ENCODE measurements at regions of chr12 and their contacts with region 1.

Region 1: GRCh38 chr12:22034709-22035506 is 11.1 kb upstream of the CMAS start:
- DNase-seq: no peak
- ATAC-seq: no peak
- H3K4me3 Mint-ChIP-seq: no peak overlapping the region
- H3K27ac Mint-ChIP-seq: no peak overlapping the region
- H3K4me1 Mint-ChIP-seq: peaks cover 6% of the 10 kb centered on the region
- H3K27me3 Mint-ChIP-seq: no peaks in the 10 kb centered on the region

Region 2: GRCh38 chr12:21607701-21608100 is 427.2 kb before region 1 on chr12:
- CTCF ChIA-PET with region 1: no interaction called
- POLR2A ChIA-PET with region 1: no interaction called
- intact Hi-C with region 1: loop called in 1 of 2 experiments (anchors 10 kb)
- DNase-seq: no peak
- ATAC-seq: peak; percentile 51
- H3K4me3 Mint-ChIP-seq: no peak overlapping the region
- H3K27ac Mint-ChIP-seq: no peak overlapping the region
- H3K4me1 Mint-ChIP-seq: peaks cover 6% of the 10 kb centered on the region
- H3K27me3 Mint-ChIP-seq: no peaks in the 10 kb centered on the region

Region 3: DNA sequence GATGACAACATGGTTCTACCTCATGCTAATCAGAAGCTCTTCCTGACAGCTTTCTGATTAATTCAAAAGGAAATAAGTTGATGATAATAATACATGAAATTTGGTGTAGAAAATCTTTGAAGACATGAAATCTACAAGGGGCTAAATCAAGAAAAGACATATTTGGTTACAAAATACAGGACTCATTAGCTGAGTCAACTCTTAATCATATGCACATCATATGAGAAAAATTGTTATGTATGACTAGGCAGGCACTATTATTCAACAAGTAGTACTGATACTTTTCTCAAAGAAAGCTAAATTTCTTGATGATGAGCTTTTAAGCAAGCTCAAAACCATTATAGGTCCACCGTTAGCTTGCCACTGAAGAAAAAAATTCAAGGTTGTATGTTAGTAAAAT is 100.7 kb before region 1 on chr12:
- CTCF ChIA-PET with region 1: no interaction called
- POLR2A ChIA-PET with region 1: no interaction called
- intact Hi-C with region 1: no loop called
- DNase-seq: no peak
- ATAC-seq: no peak
- H3K4me3 Mint-ChIP-seq: no peak overlapping the region
- H3K27ac Mint-ChIP-seq: no peak overlapping the region
- H3K4me1 Mint-ChIP-seq: peaks cover 2% of the 10 kb centered on the region
- H3K27me3 Mint-ChIP-seq: peaks cover 23% of the 10 kb centered on the region

Measured in activated CD4-positive, alpha-beta T cell treated with anti-CD3 and anti-CD28 coated beads for 36 hours (primary cell).